ENCODE measurements at regions of chr6 and their contacts with region 1.

Region 1: DNA sequence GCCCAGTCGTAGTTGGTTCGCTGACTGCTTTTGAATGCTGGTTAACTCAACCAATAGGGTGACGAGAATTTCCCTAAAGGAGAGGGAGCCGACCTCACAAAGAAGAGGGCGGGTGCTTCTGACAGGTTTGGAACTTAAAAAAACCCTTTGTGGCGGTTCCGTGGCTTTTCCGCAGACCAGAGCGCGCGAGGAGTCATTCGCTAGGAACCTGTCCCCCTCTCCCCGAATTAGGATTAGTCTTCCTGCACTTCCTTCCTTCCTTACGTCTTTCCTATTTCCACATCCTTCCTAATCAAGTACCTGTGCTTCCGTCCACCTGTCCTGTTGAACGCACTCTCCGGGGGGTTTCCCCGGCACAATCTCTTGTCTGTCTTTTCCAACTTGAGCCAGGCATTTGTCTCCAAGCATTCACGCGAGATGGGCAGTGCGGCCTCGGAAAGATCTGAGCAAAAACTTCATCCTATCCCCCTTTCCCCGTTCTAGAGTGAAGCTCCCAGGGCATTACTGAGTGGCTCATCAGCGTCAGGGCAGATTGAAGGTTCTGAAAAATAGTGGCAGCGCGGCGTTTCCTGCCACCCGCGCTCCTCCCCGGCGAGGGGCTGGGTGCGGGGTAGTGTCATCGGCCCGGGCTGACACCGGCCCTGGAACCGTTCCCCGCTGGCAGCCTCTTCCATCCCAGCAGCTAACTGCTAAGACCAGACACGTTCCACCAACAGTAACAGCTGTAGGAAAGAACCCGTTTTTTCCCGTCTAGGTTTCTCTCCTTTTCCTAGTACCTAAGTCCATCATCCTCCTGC is 1.5 kb upstream of the STXBP5 start:
- DNase-seq: peak; percentile 39 to 94 (median 90)
- ATAC-seq: peak; percentile 90
- H3K4me3 ChIP-seq: peak overlapping the region; percentile 84
- H3K4me3 Mint-ChIP-seq: peak overlapping the region; percentile 91 to 100 (median 99)
- H3K27ac ChIP-seq: peak overlapping the region; percentile 90
- H3K27ac Mint-ChIP-seq: peak overlapping the region; percentile 92 to 99 (median 98)
- H3K4me1 ChIP-seq: peaks cover 4% of the 10 kb centered on the region in 2 donors
- H3K4me1 Mint-ChIP-seq: peaks cover 17 to 40% (median 35%) of the 10 kb centered on the region in 7 donors
- H3K27me3 ChIP-seq: no peaks in the 10 kb centered on the region
- H3K27me3 Mint-ChIP-seq: no peaks in the 10 kb centered on the region

Region 2: GRCh38 chr6:145814501-145815308 is 1388.0 kb before region 1 on chr6 and contains the start of gene FBXO30:
- CTCF ChIA-PET with region 1: no interaction called
- POLR2A ChIA-PET with region 1: no interaction called
- intact Hi-C with region 1: loop called (anchors 2 kb)
- DNase-seq: peak; percentile 81 to 94 (median 88)
- ATAC-seq: peak; percentile 98
- H3K4me3 ChIP-seq: peak within 1 kb of the TSS; percentile 92
- H3K4me3 Mint-ChIP-seq: peak within 1 kb of the TSS; percentile 91 to 96 (median 94)
- H3K27ac ChIP-seq: peak within 1 kb of the TSS; percentile 80
- H3K27ac Mint-ChIP-seq: peak within 1 kb of the TSS; percentile 83 to 96 (median 95)
- H3K4me1 ChIP-seq: peaks cover 0 to 18% of the 10 kb centered on the region in 2 donors
- H3K4me1 Mint-ChIP-seq: peaks cover 25 to 50% (median 41%) of the 10 kb centered on the region in 7 donors
- H3K27me3 ChIP-seq: no peaks in the 10 kb centered on the region
- H3K27me3 Mint-ChIP-seq: peaks cover 0 to 3% (median 0%) of the 10 kb centered on the region in 5 donors
- total RNA-seq, gene FBXO30: 1.6 to 5.1 (median 4.8) TPM

Region 3: GRCh38 chr6:146857180-146857979 is 345.3 kb before region 1 on chr6:
- CTCF ChIA-PET with region 1: interaction called, 3 read pairs
- POLR2A ChIA-PET with region 1: no interaction called
- intact Hi-C with region 1: loop called (anchors 1 to 5 kb)
- DNase-seq: peak; percentile 31 to 80 (median 72)
- ATAC-seq: peak; percentile 96
- H3K4me3 ChIP-seq: no peak overlapping the region
- H3K4me3 Mint-ChIP-seq: peak overlapping the region in 6 of 10 donors; percentile 39 to 60 (median 52)
- H3K27ac ChIP-seq: no peak overlapping the region
- H3K27ac Mint-ChIP-seq: peak overlapping the region in 1 of 9 donors; percentile 56
- H3K4me1 ChIP-seq: no peaks in the 10 kb centered on the region
- H3K4me1 Mint-ChIP-seq: peaks cover 0 to 5% (median 4%) of the 10 kb centered on the region in 7 donors
- H3K27me3 ChIP-seq: no peaks in the 10 kb centered on the region
- H3K27me3 Mint-ChIP-seq: peaks cover 0 to 7% (median 0%) of the 10 kb centered on the region in 5 donors

Region 4: DNA sequence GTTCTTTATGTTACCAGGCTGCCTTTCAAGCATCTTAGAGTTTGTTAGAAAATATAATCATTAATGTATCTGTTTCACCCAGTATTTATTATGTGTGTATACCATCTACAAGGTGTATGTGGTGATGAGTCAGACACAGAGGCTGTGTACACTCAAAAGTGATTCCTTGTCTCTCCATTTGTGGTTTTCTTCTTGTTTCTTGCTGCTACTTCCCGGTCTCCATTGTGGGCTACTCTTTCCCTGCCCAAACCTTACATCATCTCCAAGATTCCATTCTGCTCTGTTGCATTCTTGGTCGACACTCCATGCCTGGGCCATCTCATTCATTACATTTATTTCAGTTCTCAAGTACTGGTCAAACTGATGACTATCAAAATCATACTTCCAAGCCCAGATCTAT is 180.7 kb before region 1 on chr6:
- CTCF ChIA-PET with region 1: no interaction called
- POLR2A ChIA-PET with region 1: no interaction called
- intact Hi-C with region 1: no loop called
- DNase-seq: no peak
- ATAC-seq: no peak
- H3K4me3 ChIP-seq: no peak overlapping the region
- H3K4me3 Mint-ChIP-seq: no peak overlapping the region
- H3K27ac ChIP-seq: no peak overlapping the region
- H3K27ac Mint-ChIP-seq: no peak overlapping the region
- H3K4me1 ChIP-seq: no peaks in the 10 kb centered on the region
- H3K4me1 Mint-ChIP-seq: no peaks in the 10 kb centered on the region
- H3K27me3 ChIP-seq: no peaks in the 10 kb centered on the region
- H3K27me3 Mint-ChIP-seq: no peaks in the 10 kb centered on the region

Region 5: GRCh38 chr6:147108259-147108910 is 94.3 kb before region 1 on chr6:
- CTCF ChIA-PET with region 1: no interaction called
- POLR2A ChIA-PET with region 1: interaction called, 5 read pairs
- intact Hi-C with region 1: loop called (anchors 1 to 2 kb)
- DNase-seq: peak in 1 of 9 donors; percentile 15
- ATAC-seq: no peak
- H3K4me3 ChIP-seq: no peak overlapping the region
- H3K4me3 Mint-ChIP-seq: peak overlapping the region in 5 of 10 donors; percentile 32 to 89 (median 57)
- H3K27ac ChIP-seq: no peak overlapping the region
- H3K27ac Mint-ChIP-seq: peak overlapping the region in 7 of 9 donors; percentile 31 to 91 (median 66)
- H3K4me1 ChIP-seq: peaks cover 23 to 47% of the 10 kb centered on the region in 2 donors
- H3K4me1 Mint-ChIP-seq: peaks cover 32 to 78% (median 63%) of the 10 kb centered on the region in 7 donors
- H3K27me3 ChIP-seq: no peaks in the 10 kb centered on the region
- H3K27me3 Mint-ChIP-seq: no peaks in the 10 kb centered on the region

Region 6: DNA sequence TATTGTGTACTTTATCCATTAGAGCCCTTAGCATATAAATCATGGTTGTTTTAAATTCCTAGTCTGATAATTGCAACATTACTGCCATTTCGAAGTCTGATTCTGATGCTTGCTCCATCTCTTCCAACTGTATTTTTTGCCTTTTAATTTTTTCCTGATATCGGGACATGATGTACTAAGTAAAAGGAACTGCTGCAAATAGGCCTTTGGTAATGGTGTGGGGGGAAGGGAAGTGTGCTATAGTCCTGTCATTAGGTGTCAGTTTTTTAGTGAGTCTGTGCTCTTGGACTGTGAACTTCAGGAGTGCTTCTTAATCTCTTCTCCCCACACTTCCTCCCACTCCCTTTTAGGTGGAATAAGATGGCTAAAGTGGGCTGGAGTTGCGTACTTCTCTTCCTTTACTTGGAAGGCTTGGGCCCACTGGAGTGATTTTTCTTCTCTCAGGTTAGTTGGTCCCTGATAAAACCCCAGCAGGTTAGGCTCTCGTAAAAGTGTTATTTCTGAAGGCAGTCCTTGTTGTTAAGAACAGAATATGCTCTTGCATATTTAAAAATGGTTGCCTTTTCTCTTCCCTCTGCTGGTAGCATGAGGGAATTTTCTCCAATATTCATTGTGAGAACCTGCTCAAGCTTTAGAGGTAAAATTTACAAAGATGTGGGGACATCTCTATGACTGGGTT is 19.6 kb after region 1 on chr6:
- CTCF ChIA-PET with region 1: no interaction called
- POLR2A ChIA-PET with region 1: interaction called, 5 read pairs
- intact Hi-C with region 1: loop called (anchors 1 to 2 kb)
- DNase-seq: peak in 6 of 9 donors; percentile 21 to 45 (median 36)
- ATAC-seq: peak; percentile 61
- H3K4me3 ChIP-seq: no peak overlapping the region
- H3K4me3 Mint-ChIP-seq: peak overlapping the region in 2 of 10 donors; percentile 29 to 35
- H3K27ac ChIP-seq: no peak overlapping the region
- H3K27ac Mint-ChIP-seq: peak overlapping the region in 6 of 9 donors; percentile 11 to 64 (median 42)
- H3K4me1 ChIP-seq: peaks cover 0 to 5% of the 10 kb centered on the region in 2 donors
- H3K4me1 Mint-ChIP-seq: peaks cover 16 to 74% (median 65%) of the 10 kb centered on the region in 7 donors
- H3K27me3 ChIP-seq: no peaks in the 10 kb centered on the region
- H3K27me3 Mint-ChIP-seq: no peaks in the 10 kb centered on the region

Region 7: DNA sequence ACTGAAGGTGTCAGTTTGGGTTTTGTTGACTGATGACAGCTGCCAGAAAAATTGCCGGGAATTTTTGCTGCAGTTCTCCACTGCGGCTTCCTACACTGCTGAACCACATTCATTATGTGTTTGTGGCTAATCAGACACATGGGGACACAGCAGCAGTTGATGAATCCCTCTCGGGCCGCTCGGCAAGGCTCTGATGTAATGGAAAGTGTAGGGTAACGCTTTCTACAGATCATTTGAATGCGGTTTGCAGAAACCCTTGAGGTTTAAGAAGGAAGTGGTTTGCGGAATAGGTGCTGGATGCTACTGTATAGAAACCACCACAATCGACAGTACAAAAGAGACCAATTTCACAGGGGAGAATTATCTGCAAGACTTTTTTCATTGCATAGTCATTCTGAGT is 1001.3 kb after region 1 on chr6:
- CTCF ChIA-PET with region 1: no interaction called
- POLR2A ChIA-PET with region 1: no interaction called
- intact Hi-C with region 1: loop called in 1 of 2 experiments (anchors 5 kb)
- DNase-seq: peak in 8 of 9 donors; percentile 57 to 77 (median 68)
- ATAC-seq: peak; percentile 85
- H3K4me3 ChIP-seq: no peak overlapping the region
- H3K4me3 Mint-ChIP-seq: peak overlapping the region; percentile 6 to 77 (median 64)
- H3K27ac ChIP-seq: no peak overlapping the region
- H3K27ac Mint-ChIP-seq: peak overlapping the region in 7 of 9 donors; percentile 30 to 97 (median 80)
- H3K4me1 ChIP-seq: peaks cover 0 to 14% of the 10 kb centered on the region in 2 donors
- H3K4me1 Mint-ChIP-seq: peaks cover 25 to 61% (median 47%) of the 10 kb centered on the region in 7 donors
- H3K27me3 ChIP-seq: peaks cover 0 to 6% of the 10 kb centered on the region in 2 donors
- H3K27me3 Mint-ChIP-seq: peaks cover 47 to 88% (median 52%) of the 10 kb centered on the region in 5 donors

Measured in naive thymus-derived CD4-positive, alpha-beta T cell (primary cell).